T-cell (primary cell): ENCODE measurements at regions of chr16 and their contacts with region 1.

Region 1: GRCh38 chr16:66872943-66873684 is 7.2 kb upstream of the PDP2 start:
- DNase-seq: peak; percentile 66 to 94 (median 77)
- ATAC-seq: peak; percentile 89 to 92 (median 91)
- H3K4me3 ChIP-seq: peak overlapping the region; percentile 44 to 61
- H3K4me3 Mint-ChIP-seq: peak overlapping the region; percentile 60 to 83 (median 73)
- H3K27ac ChIP-seq: peak overlapping the region; percentile 42
- H3K27ac Mint-ChIP-seq: peak overlapping the region; percentile 74 to 86
- H3K4me1 ChIP-seq: peaks cover 0 to 29% of the 10 kb centered on the region in 2 experiments
- H3K4me1 Mint-ChIP-seq: peaks cover 20 to 32% (median 21%) of the 10 kb centered on the region in 3 donors
- H3K27me3 ChIP-seq: no peaks in the 10 kb centered on the region
- H3K27me3 Mint-ChIP-seq: no peaks in the 10 kb centered on the region

Region 2: GRCh38 chr16:66406534-66407221 is 466.4 kb before region 1 on chr16:
- CTCF ChIA-PET with region 1: interaction called in 1 of 2 experiments, 15 read pairs
- POLR2A ChIA-PET with region 1: no interaction called
- DNase-seq: peak; percentile 49 to 92 (median 83)
- ATAC-seq: peak; percentile 73 to 79 (median 78)
- H3K4me3 ChIP-seq: peak overlapping the region; percentile 64 to 76
- H3K4me3 Mint-ChIP-seq: peak overlapping the region; percentile 81 to 86 (median 85)
- H3K27ac ChIP-seq: no peak overlapping the region
- H3K27ac Mint-ChIP-seq: peak overlapping the region; percentile 6 to 22
- H3K4me1 ChIP-seq: peaks cover 12 to 25% of the 10 kb centered on the region in 2 experiments
- H3K4me1 Mint-ChIP-seq: peaks cover 25 to 33% (median 31%) of the 10 kb centered on the region in 3 donors
- H3K27me3 ChIP-seq: peaks cover 0 to 27% of the 10 kb centered on the region in 2 experiments
- H3K27me3 Mint-ChIP-seq: peaks cover 0 to 12% of the 10 kb centered on the region in 2 donors

Region 3: GRCh38 chr16:66798161-66798560 is 75.0 kb before region 1 on chr16:
- CTCF ChIA-PET with region 1: no interaction called
- POLR2A ChIA-PET with region 1: no interaction called
- DNase-seq: no peak
- ATAC-seq: no peak
- H3K4me3 ChIP-seq: no peak overlapping the region
- H3K4me3 Mint-ChIP-seq: no peak overlapping the region
- H3K27ac ChIP-seq: no peak overlapping the region
- H3K27ac Mint-ChIP-seq: no peak overlapping the region
- H3K4me1 ChIP-seq: no peaks in the 10 kb centered on the region
- H3K4me1 Mint-ChIP-seq: no peaks in the 10 kb centered on the region
- H3K27me3 ChIP-seq: no peaks in the 10 kb centered on the region
- H3K27me3 Mint-ChIP-seq: no peaks in the 10 kb centered on the region

Region 4: GRCh38 chr16:66830422-66831404 is 42.4 kb before region 1 on chr16 and contains the start of gene NAE1:
- CTCF ChIA-PET with region 1: interaction called, 11 to 38 read pairs
- POLR2A ChIA-PET with region 1: no interaction called
- DNase-seq: peak; percentile 74 to 97 (median 86)
- ATAC-seq: peak; percentile 94 to 99 (median 95)
- H3K4me3 ChIP-seq: peak within 1 kb of the TSS; percentile 64 to 90
- H3K4me3 Mint-ChIP-seq: peak within 1 kb of the TSS; percentile 67 to 77 (median 76)
- H3K27ac ChIP-seq: no peak within 1 kb of the TSS
- H3K27ac Mint-ChIP-seq: peak within 1 kb of the TSS in 1 of 2 donors; percentile 48
- H3K4me1 ChIP-seq: peaks cover 8 to 28% of the 10 kb centered on the region in 2 experiments
- H3K4me1 Mint-ChIP-seq: peaks cover 31 to 38% (median 36%) of the 10 kb centered on the region in 3 donors
- H3K27me3 ChIP-seq: peaks cover 0 to 14% of the 10 kb centered on the region in 2 experiments
- H3K27me3 Mint-ChIP-seq: peaks cover 0 to 5% of the 10 kb centered on the region in 2 donors
- total RNA-seq, gene NAE1: 67.8 to 93.2 (median 75.0) TPM

Region 5: DNA sequence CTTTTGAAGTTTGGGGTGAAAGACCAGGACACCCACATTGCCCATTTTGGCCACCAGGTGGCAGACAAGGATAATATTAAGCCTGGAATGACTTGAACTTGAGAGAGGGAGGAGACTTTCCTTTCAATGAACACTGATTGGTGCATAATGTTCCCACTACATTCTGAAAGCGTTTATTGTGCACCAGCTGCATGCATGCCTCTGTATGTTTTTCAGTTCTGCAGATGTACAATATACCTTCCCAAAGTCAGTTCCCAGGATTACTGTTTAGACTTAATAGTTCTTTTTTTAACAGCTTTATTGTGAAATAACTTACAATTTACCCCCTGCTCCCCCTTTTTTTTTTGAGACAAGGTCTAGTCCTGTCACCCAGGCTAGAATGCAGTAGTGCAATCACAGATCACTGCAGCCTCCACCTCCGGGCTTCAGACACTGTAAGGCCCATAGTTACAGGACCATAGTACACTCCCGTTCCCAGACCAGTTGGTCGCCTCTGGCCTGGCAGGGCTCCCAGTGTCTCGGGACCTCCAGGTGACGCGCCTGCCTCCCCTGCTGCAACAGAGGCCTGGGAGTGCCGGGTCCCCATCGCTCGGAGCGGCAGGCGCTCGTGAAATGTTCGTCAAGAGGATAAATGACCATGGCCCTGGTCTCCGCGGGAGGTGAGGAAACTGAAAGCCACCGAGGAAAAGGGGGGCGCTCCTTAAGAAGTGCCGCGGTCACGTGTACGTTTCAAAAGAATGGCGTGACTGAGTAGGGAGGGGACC is 74.4 kb after region 1 on chr16:
- CTCF ChIA-PET with region 1: no interaction called
- POLR2A ChIA-PET with region 1: no interaction called
- DNase-seq: peak; percentile 53 to 91 (median 80)
- ATAC-seq: peak; percentile 85 to 90 (median 88)
- H3K4me3 ChIP-seq: peak overlapping the region; percentile 54 to 79
- H3K4me3 Mint-ChIP-seq: peak overlapping the region; percentile 84 to 87 (median 87)
- H3K27ac ChIP-seq: no peak overlapping the region
- H3K27ac Mint-ChIP-seq: peak overlapping the region in 1 of 2 donors; percentile 47
- H3K4me1 ChIP-seq: peaks cover 5 to 23% of the 10 kb centered on the region in 2 experiments
- H3K4me1 Mint-ChIP-seq: peaks cover 17 to 25% (median 18%) of the 10 kb centered on the region in 3 donors
- H3K27me3 ChIP-seq: peaks cover 7 to 35% of the 10 kb centered on the region in 2 experiments
- H3K27me3 Mint-ChIP-seq: peaks cover 25 to 35% of the 10 kb centered on the region in 2 donors

Region 6: DNA sequence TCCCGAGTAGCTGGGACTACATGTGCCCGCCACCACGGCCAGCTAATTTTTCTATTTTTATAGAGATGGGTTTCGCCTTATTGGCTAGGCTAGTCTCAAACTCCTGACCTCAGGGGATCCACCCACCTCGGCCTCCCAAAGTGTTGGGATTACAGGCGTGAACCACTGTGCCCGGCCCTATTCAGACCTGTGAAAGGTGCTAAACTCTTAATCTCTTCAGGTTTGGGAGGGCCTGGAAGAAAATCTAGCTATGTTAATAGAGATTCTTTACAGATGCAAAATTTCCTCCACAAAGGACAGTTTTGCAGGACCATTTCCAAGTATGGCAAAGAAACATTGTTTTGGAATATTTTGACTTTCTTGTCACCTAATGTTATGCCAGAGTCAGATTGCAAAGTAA is 1369.0 kb after region 1 on chr16:
- CTCF ChIA-PET with region 1: interaction called in 1 of 2 experiments, 10 read pairs
- POLR2A ChIA-PET with region 1: no interaction called
- DNase-seq: no peak
- ATAC-seq: no peak
- H3K4me3 ChIP-seq: no peak overlapping the region
- H3K4me3 Mint-ChIP-seq: no peak overlapping the region
- H3K27ac ChIP-seq: no peak overlapping the region
- H3K27ac Mint-ChIP-seq: no peak overlapping the region
- H3K4me1 ChIP-seq: peaks cover 15 to 56% of the 10 kb centered on the region in 2 experiments
- H3K4me1 Mint-ChIP-seq: peaks cover 38 to 47% (median 42%) of the 10 kb centered on the region in 3 donors
- H3K27me3 ChIP-seq: peaks cover 0 to 6% of the 10 kb centered on the region in 2 experiments
- H3K27me3 Mint-ChIP-seq: no peaks in the 10 kb centered on the region